Activated CD4-positive, alpha-beta memory T cell treated with anti-CD3 and anti-CD28 coated beads for 36 hours (primary cell): ENCODE measurements at regions of chr19 and their contacts with region 1.

Region 1: GRCh38 chr19:36850559-36851442 is at the start of gene ZNF345:
- DNase-seq: peak; percentile 92
- H3K4me3 Mint-ChIP-seq: no peak within 1 kb of the TSS
- H3K27ac Mint-ChIP-seq: no peak within 1 kb of the TSS
- H3K4me1 Mint-ChIP-seq: peaks cover 12% of the 10 kb centered on the region
- H3K27me3 Mint-ChIP-seq: no peaks in the 10 kb centered on the region
- total RNA-seq, gene ZNF345: 3.8 to 4.2 TPM

Region 2: GRCh38 chr19:36605101-36605876 is 245.5 kb before region 1 on chr19 and contains the start of gene ZNF382:
- CTCF ChIA-PET with region 1: no interaction called
- POLR2A ChIA-PET with region 1: interaction called, 7 read pairs
- intact Hi-C with region 1: loop called (anchors 10 kb)
- DNase-seq: peak; percentile 90
- H3K4me3 Mint-ChIP-seq: peak within 1 kb of the TSS; percentile 92
- H3K27ac Mint-ChIP-seq: peak within 1 kb of the TSS; percentile 95
- H3K4me1 Mint-ChIP-seq: peaks cover 24% of the 10 kb centered on the region
- H3K27me3 Mint-ChIP-seq: no peaks in the 10 kb centered on the region
- total RNA-seq, gene ZNF382: 10.9 to 14.8 TPM

Region 3: GRCh38 chr19:36772311-36773222 is 78.2 kb before region 1 on chr19 and contains the start of gene ZNF850:
- CTCF ChIA-PET with region 1: no interaction called
- POLR2A ChIA-PET with region 1: interaction called, 4 read pairs
- intact Hi-C with region 1: loop called (anchors 1 kb)
- DNase-seq: peak; percentile 95
- H3K4me3 Mint-ChIP-seq: peak within 1 kb of the TSS; percentile 91
- H3K27ac Mint-ChIP-seq: peak within 1 kb of the TSS; percentile 83
- H3K4me1 Mint-ChIP-seq: peaks cover 21% of the 10 kb centered on the region
- H3K27me3 Mint-ChIP-seq: no peaks in the 10 kb centered on the region
- total RNA-seq, gene ZNF850: 6.7 TPM

Region 4: DNA sequence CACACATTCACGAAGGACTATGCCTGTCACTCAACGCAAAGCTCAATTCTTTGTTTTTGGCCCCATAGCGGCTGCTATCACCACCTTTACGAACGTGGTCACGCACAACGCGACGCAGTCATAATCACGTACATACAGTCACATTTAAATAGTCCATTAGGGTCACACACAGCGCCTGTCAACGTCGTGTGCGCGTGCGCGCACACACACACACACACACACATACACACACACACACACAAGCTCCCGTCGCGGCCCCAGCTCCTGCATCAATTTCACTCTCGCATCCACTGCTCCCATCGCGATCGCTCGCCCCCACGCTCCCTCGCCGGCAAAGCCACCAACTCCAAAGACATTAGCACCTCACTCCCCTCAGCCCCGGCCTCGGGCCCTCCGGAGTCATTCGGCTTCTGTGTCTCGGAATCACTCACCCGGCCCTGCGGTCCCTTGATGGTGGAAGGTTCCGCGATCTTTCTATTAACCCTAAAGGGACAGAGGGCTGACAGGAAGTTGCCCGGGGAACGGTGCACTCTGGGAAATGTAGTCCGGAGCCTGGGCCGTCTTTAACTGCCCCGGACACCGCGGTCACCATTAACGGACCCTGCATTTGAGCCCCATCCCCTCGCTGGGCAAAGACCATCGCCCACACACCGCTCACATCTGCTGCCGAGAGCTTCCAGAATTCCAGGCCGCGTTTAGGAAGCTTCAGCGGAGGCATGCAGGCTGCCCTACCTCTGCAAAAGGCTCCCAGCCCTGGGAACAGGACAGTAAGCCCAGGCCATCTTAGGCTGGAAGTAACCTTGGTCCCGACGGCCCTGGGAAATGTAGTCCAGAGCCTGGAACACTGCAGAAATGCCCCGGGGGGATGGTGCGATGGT is 12.7 kb before region 1 on chr19 and contains the start of gene ZNF790:
- CTCF ChIA-PET with region 1: interaction called, 8 read pairs
- POLR2A ChIA-PET with region 1: interaction called, 61 read pairs
- intact Hi-C with region 1: loop called (anchors 1 kb)
- DNase-seq: peak; percentile 93
- H3K4me3 Mint-ChIP-seq: no peak within 1 kb of the TSS
- H3K27ac Mint-ChIP-seq: no peak within 1 kb of the TSS
- H3K4me1 Mint-ChIP-seq: peaks cover 6% of the 10 kb centered on the region
- H3K27me3 Mint-ChIP-seq: no peaks in the 10 kb centered on the region
- total RNA-seq, gene ZNF790: 6.1 to 6.9 TPM

Region 5: GRCh38 chr19:37160153-37160552 is 309.4 kb after region 1 on chr19:
- CTCF ChIA-PET with region 1: no interaction called
- POLR2A ChIA-PET with region 1: no interaction called
- intact Hi-C with region 1: no loop called
- DNase-seq: no peak
- H3K4me3 Mint-ChIP-seq: no peak overlapping the region
- H3K27ac Mint-ChIP-seq: no peak overlapping the region
- H3K4me1 Mint-ChIP-seq: no peaks in the 10 kb centered on the region
- H3K27me3 Mint-ChIP-seq: no peaks in the 10 kb centered on the region

Region 6: GRCh38 chr19:37217855-37218591 is 367.2 kb after region 1 on chr19 and contains the start of gene ZNF383:
- CTCF ChIA-PET with region 1: no interaction called
- POLR2A ChIA-PET with region 1: no interaction called
- intact Hi-C with region 1: loop called (anchors 5 kb)
- DNase-seq: peak; percentile 90
- H3K4me3 Mint-ChIP-seq: peak within 1 kb of the TSS; percentile 99
- H3K27ac Mint-ChIP-seq: peak within 1 kb of the TSS; percentile 99
- H3K4me1 Mint-ChIP-seq: peaks cover 19% of the 10 kb centered on the region
- H3K27me3 Mint-ChIP-seq: no peaks in the 10 kb centered on the region
- total RNA-seq, gene ZNF383: 7.7 TPM